CD8-positive, alpha-beta T cell (primary cell): ENCODE measurements at regions of chr1 and their contacts with region 1.

Region 1: GRCh38 chr1:217617126-217617525 is 13.8 kb downstream of the GPATCH2 start:
- DNase-seq: no peak
- ATAC-seq: no peak
- H3K4me3 ChIP-seq: no peak overlapping the region
- H3K4me3 Mint-ChIP-seq: no peak overlapping the region
- H3K27ac ChIP-seq: no peak overlapping the region
- H3K27ac Mint-ChIP-seq: no peak overlapping the region
- H3K4me1 ChIP-seq: no peaks in the 10 kb centered on the region
- H3K4me1 Mint-ChIP-seq: peaks cover 25% of the 10 kb centered on the region
- H3K27me3 ChIP-seq: no peaks in the 10 kb centered on the region
- H3K27me3 Mint-ChIP-seq: no peaks in the 10 kb centered on the region
- CTCF ChIP-seq: no peak

Region 2: DNA sequence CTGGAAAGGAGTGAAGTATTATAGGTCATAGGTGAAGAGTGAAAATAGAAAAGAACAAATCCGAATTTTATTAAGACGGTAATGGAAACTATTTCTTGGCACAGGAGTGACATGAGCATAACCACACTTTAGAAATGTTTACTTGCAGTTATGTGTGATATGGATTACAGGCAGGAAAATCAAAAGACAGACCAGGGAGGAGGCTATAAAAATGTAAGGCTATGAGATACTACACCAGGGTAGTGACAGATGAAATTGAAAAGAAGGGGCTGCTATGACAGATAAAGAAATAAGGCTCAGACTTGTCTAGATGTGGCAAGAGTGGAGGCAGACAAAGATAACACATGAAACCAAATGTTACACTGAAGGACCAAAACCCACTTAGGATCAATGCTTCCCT is 18.0 kb before region 1 on chr1:
- CTCF ChIA-PET with region 1: no interaction called
- POLR2A ChIA-PET with region 1: interaction called, 4 read pairs
- intact Hi-C with region 1: loop called in 1 of 2 experiments (anchors 1 kb)
- DNase-seq: no peak
- ATAC-seq: no peak
- H3K4me3 ChIP-seq: no peak overlapping the region
- H3K4me3 Mint-ChIP-seq: no peak overlapping the region
- H3K27ac ChIP-seq: no peak overlapping the region
- H3K27ac Mint-ChIP-seq: no peak overlapping the region
- H3K4me1 ChIP-seq: no peaks in the 10 kb centered on the region
- H3K4me1 Mint-ChIP-seq: no peaks in the 10 kb centered on the region
- H3K27me3 ChIP-seq: no peaks in the 10 kb centered on the region
- H3K27me3 Mint-ChIP-seq: no peaks in the 10 kb centered on the region
- CTCF ChIP-seq: no peak

Region 3: GRCh38 chr1:217630711-217631591 is 13.8 kb after region 1 on chr1 and contains the starts of genes GPATCH2 and SPATA17:
- CTCF ChIA-PET with region 1: interaction called, 3 read pairs
- POLR2A ChIA-PET with region 1: interaction called, 5 read pairs
- intact Hi-C with region 1: loop called in 1 of 2 experiments (anchors 2 kb)
- DNase-seq: peak; percentile 51 to 94 (median 77)
- ATAC-seq: peak; percentile 89
- H3K4me3 ChIP-seq: peak within 1 kb of the TSS; percentile 76 to 89
- H3K4me3 Mint-ChIP-seq: peak within 1 kb of the TSS; percentile 98
- H3K27ac ChIP-seq: peak within 1 kb of the TSS; percentile 91 to 99
- H3K27ac Mint-ChIP-seq: peak within 1 kb of the TSS; percentile 99
- H3K4me1 ChIP-seq: peaks cover 21% of the 10 kb centered on the region
- H3K4me1 Mint-ChIP-seq: peaks cover 45% of the 10 kb centered on the region
- H3K27me3 ChIP-seq: no peaks in the 10 kb centered on the region
- H3K27me3 Mint-ChIP-seq: peaks cover 13% of the 10 kb centered on the region
- CTCF ChIP-seq: no peak
- total RNA-seq, gene GPATCH2: 7.2 to 7.6 TPM
- total RNA-seq, gene SPATA17: not detected